Head of caudate nucleus (tissue), 42 donors: ENCODE measurements at regions of chr9 and their contacts with region 1.

Region 1: DNA sequence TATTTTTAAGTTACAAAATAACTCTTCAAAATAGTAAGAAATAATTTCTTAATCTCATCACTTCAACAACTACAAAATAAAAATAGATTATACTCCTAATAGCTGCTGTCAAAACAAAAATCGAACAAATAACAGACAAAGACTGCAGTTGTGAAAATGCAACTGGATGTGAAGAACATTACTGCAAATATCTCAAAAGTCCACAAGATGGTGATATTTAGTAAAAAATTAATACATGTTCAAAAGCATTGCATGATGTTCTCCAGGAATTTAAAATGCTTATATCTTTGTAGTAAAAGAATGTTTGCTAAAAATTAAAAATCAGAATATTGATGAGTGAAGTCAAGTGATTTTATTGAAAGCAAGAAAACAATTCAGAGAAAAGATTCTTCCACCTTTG is 66.2 kb downstream of the MPDZ start:
- DNase-seq: no peak

Region 2: GRCh38 chr9:13279284-13280141 is 66.2 kb after region 1 on chr9 and contains the start of gene MPDZ:
- intact Hi-C with region 1: loop called (anchors 10 kb)
- DNase-seq: peak; percentile 18 to 87 (median 71)